Activated CD4-positive, alpha-beta T cell treated with anti-CD3 and anti-CD28 coated beads, Interleukin-2, amount 10 ng/mL, durations not matched to agents 24 days and 14 days (primary cell): ENCODE measurements at regions of chr16 and their contacts with region 1.

Region 1: DNA sequence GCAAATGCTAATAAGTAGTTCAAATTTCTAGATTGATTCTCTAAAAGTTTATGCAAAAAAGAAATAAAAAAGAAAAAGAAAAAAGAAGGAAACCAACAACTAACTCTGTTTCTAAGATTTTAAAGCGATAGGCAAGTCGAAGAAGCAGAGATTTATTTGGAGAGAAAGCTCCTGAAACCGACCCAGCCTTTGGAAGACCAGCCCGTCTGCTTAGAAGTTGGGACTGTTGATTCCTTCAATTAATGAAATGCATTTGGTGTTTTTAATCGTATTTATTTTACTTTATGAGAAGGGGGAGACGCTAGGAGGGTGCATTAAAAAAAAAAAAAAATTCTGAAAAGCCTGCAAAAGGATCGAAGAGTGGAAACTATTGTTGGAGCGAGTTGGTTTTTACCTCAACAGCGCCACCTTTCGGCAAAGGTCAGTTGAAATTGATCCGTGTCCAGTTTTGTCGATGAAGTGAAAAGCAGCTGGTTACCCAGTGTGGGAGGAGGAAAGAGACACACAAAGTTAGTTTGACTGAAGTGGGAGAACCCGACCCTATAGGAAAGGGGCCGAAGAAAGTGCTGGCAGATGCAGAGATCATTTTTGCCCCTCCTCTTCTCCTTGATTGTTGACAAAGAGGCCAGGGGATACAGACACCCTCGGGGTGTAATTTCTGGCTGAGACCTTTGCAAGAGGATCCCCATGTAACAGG is 1.5 kb upstream of the MAF start:
- DNase-seq: peak; percentile 95
- H3K4me3 Mint-ChIP-seq: peak overlapping the region; percentile 99
- H3K27ac Mint-ChIP-seq: peak overlapping the region; percentile 99
- H3K4me1 Mint-ChIP-seq: peaks cover 47% of the 10 kb centered on the region
- H3K27me3 Mint-ChIP-seq: peaks cover 8% of the 10 kb centered on the region

Region 2: GRCh38 chr16:78705694-78706093 is 896.4 kb before region 1 on chr16:
- intact Hi-C with region 1: loop called (anchors 1 kb)
- DNase-seq: peak; percentile 65
- H3K4me3 Mint-ChIP-seq: no peak overlapping the region
- H3K27ac Mint-ChIP-seq: no peak overlapping the region
- H3K4me1 Mint-ChIP-seq: peaks cover 5% of the 10 kb centered on the region
- H3K27me3 Mint-ChIP-seq: peaks cover 4% of the 10 kb centered on the region

Region 3: GRCh38 chr16:78962457-78962929 is 639.6 kb before region 1 on chr16:
- intact Hi-C with region 1: loop called (anchors 5 kb)
- DNase-seq: no peak
- H3K4me3 Mint-ChIP-seq: no peak overlapping the region
- H3K27ac Mint-ChIP-seq: peak overlapping the region; percentile 46
- H3K4me1 Mint-ChIP-seq: peaks cover 8% of the 10 kb centered on the region
- H3K27me3 Mint-ChIP-seq: no peaks in the 10 kb centered on the region

Region 4: DNA sequence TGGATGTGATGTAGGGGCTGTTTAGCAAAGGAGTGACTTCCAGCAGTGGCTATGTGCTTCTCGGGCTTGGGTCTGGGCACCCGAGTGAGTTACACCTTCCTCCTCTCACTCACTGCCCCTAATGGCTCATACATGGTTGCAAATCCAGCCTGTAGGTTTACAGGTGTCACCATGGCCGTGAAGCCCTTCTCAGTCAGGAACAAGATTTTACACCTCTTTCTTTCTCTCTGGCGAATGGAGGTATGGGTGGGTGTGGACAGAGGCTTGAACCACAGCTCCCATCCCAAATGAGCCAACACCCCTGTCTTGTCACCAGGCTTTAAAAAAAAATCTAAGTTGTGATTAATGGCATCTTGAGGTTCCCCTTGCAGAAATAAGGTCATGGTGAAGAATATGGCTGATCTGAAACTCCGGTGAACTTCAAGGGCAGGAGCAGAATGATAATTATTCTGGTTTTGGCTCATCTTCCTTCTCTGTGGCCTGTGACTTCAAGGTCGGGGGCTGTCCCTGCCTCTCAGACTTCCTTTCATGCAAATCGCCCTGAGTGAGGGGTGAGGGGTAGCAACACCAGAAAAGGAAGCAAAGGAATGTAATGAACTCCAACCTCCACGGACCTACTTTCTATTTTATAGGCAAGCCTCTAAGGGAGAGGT is 332.7 kb before region 1 on chr16:
- intact Hi-C with region 1: loop called (anchors 1 kb)
- DNase-seq: peak; percentile 88
- H3K4me3 Mint-ChIP-seq: peak overlapping the region; percentile 56
- H3K27ac Mint-ChIP-seq: peak overlapping the region; percentile 86
- H3K4me1 Mint-ChIP-seq: peaks cover 74% of the 10 kb centered on the region
- H3K27me3 Mint-ChIP-seq: peaks cover 9% of the 10 kb centered on the region

Region 5: GRCh38 chr16:79717333-79718137 is 115.5 kb after region 1 on chr16:
- intact Hi-C with region 1: loop called (anchors 5 kb)
- DNase-seq: no peak
- H3K4me3 Mint-ChIP-seq: no peak overlapping the region
- H3K27ac Mint-ChIP-seq: no peak overlapping the region
- H3K4me1 Mint-ChIP-seq: peaks cover 17% of the 10 kb centered on the region
- H3K27me3 Mint-ChIP-seq: peaks cover 5% of the 10 kb centered on the region

Region 6: GRCh38 chr16:80466024-80466987 is 864.2 kb after region 1 on chr16:
- intact Hi-C with region 1: loop called (anchors 10 kb)
- DNase-seq: peak; percentile 87
- H3K4me3 Mint-ChIP-seq: no peak overlapping the region
- H3K27ac Mint-ChIP-seq: no peak overlapping the region
- H3K4me1 Mint-ChIP-seq: no peaks in the 10 kb centered on the region
- H3K27me3 Mint-ChIP-seq: peaks cover 20% of the 10 kb centered on the region